ENCODE measurements at regions of chr18 and their contacts with region 1.

Region 1: DNA sequence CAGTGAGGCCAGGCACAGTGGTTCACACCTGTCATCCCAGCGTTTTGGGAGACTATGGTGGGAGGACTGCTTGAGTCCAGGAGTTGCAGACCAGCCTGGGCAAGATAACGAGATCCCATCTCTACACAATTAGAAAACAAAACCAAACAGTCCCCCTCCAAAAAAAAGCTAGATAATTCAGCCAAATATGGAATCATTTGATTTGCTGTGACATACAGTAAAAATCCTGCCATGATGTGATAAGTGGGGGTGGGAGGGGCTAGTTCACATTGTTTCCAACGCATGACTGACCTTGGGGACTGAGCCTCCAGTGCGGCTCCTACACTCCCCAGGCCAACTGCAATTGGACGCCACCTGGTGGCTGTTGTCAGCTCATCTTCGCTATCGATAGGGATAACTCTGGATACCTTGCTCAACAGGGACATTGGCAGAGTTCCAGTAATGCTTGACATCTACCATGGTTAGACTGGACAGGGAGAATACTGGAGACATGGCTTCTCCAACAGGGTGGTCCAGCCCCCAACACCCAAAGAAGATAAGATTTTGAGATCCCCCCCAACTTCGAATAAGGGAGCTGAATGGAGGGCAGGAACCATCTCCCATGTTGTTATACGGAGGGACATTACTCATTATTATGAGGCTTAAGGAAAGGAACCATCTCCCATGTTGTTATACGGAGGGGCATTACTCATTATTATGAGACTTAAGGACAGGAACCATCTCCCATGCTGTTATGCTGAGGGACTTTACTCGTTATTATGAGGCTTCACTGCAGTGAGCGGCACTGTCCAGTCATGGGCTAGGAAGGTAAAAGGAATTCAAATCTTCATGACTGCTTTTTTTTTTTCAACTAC is 135.9 kb downstream of the TGIF1 start:
- DNase-seq: peak; percentile 64 to 89
- ATAC-seq: peak; percentile 95 to 96
- H3K4me3 ChIP-seq: no peak overlapping the region
- H3K27ac ChIP-seq: peak overlapping the region; percentile 63 to 77
- H3K4me1 ChIP-seq: peaks cover 34% of the 10 kb centered on the region
- CTCF ChIP-seq: peak; percentile 55
- EP300 ChIP-seq: no peak
- POLR2A ChIP-seq: no peak
- RAD21 ChIP-seq: peak; percentile 70 to 76

Region 2: DNA sequence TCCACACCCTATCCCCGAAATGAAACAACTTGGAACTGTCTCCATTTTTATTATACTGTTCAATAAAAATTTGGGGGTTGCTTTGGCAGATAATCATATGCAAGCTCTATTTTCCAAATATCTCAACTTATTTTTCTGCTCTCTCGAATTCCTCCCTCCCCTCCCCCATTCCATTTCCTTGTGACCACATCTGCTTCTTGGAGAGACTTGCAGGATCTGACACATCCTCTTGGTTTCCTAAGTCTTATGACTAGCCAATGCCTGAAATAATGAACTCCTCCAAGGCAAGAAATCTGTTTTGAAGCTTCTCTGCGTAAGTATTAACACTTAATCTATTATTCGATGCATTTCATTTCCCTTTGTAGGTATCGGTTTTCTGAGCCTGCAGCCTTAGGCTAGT is 119.8 kb before region 1 on chr18:
- CTCF ChIA-PET with region 1: interaction called, 12 read pairs
- POLR2A ChIA-PET with region 1: no interaction called
- DNase-seq: peak in 1 of 2 experiments; percentile 66
- ATAC-seq: peak; percentile 12 to 59; a peak in 4 of 6 replicates
- H3K4me3 ChIP-seq: no peak overlapping the region
- H3K27ac ChIP-seq: peak overlapping the region; percentile 55 to 63
- H3K4me1 ChIP-seq: peaks cover 49% of the 10 kb centered on the region
- CTCF ChIP-seq: no peak
- EP300 ChIP-seq: no peak
- POLR2A ChIP-seq: no peak
- RAD21 ChIP-seq: no peak